HepG2 (cell line): ENCODE measurements at regions of chr2 and their contacts with region 1.

Region 1: GRCh38 chr2:219057709-219058540 is 2.8 kb downstream of the IHH start:
- DNase-seq: peak; percentile 62
- ATAC-seq: peak; percentile 78
- H3K4me3 ChIP-seq: peak overlapping the region; percentile 29 to 70 (median 50); a peak in 4 of 6 replicates
- H3K27ac ChIP-seq: no peak overlapping the region
- H3K4me1 ChIP-seq: peaks cover 23% of the 10 kb centered on the region
- H3K27me3 ChIP-seq: peaks cover 14 to 41% of the 10 kb centered on the region in 2 experiments; a peak in 4 of 5 replicates
- CTCF ChIP-seq: peak; percentile 100
- EP300 ChIP-seq: no peak
- POLR2A ChIP-seq: no peak
- RAD21 ChIP-seq: peak; percentile 100

Region 2: DNA sequence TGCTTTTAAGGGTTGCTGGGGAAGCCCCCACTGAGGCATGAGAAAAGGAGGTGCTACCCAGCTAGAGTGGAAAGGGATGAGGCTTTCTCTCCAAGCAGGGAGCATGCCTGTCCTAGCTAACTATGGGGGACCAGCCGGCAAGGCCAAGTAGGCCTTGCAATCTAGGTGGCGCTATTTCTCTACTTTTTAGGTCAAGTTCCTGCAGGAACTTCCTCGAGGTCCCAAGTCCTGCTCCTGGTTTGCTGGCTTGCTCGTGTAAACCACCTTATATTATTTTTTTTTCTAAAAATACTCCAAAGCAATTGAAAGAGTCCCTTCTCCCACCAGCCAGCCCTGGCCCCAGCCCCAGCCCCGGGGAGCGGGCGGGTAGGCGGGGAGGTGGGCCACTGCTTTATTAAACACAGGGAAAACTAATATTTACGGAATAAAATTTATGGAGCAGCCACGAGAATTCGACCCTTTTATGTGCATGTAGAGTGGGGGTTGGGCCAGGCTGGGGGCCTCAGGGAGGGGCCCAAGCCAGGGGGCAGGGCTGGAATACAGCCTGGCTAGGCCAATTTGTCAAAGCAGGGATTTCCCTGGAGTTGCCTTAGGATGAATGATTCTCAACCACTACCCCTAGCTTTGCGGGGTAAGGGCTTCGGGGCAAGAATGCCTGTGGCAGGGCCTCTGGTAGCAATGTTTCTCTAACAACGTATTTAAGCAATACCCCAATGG is 15.6 kb after region 1 on chr2:
- CTCF ChIA-PET with region 1: interaction called, 12 read pairs
- POLR2A ChIA-PET with region 1: interaction called, 38 read pairs
- in situ Hi-C with region 1: no loop called
- intact Hi-C with region 1: loop called (anchors 1 kb)
- DNase-seq: peak; percentile 80
- ATAC-seq: peak; percentile 66
- H3K4me3 ChIP-seq: no peak overlapping the region
- H3K27ac ChIP-seq: no peak overlapping the region
- H3K4me1 ChIP-seq: peaks cover 53% of the 10 kb centered on the region
- H3K27me3 ChIP-seq: no peaks in the 10 kb centered on the region
- CTCF ChIP-seq: peak; percentile 88
- EP300 ChIP-seq: no peak
- POLR2A ChIP-seq: no peak
- RAD21 ChIP-seq: peak; percentile 90

Region 3: GRCh38 chr2:219111375-219112061 is 53.6 kb after region 1 on chr2:
- CTCF ChIA-PET with region 1: interaction called, 82 read pairs
- POLR2A ChIA-PET with region 1: interaction called, 22 read pairs
- in situ Hi-C with region 1: loop called (anchors 5 kb)
- intact Hi-C with region 1: no loop called
- DNase-seq: peak; percentile 77
- ATAC-seq: peak; percentile 90
- H3K4me3 ChIP-seq: peak overlapping the region in 1 of 3 experiments; percentile 20; a peak in 2 of 6 replicates
- H3K27ac ChIP-seq: peak overlapping the region; percentile 17
- H3K4me1 ChIP-seq: peaks cover 83% of the 10 kb centered on the region
- H3K27me3 ChIP-seq: no peaks in the 10 kb centered on the region
- CTCF ChIP-seq: no peak
- EP300 ChIP-seq: peak in 1 of 2 experiments; percentile 84; a peak in 2 of 4 replicates
- POLR2A ChIP-seq: no peak
- RAD21 ChIP-seq: no peak

Region 4: GRCh38 chr2:219126551-219126950 is 68.6 kb after region 1 on chr2:
- CTCF ChIA-PET with region 1: interaction called, 5 read pairs
- POLR2A ChIA-PET with region 1: interaction called, 4 read pairs
- in situ Hi-C with region 1: no loop called
- intact Hi-C with region 1: loop called (anchors 2 kb)
- DNase-seq: peak; percentile 78
- ATAC-seq: peak; percentile 89
- H3K4me3 ChIP-seq: no peak overlapping the region
- H3K27ac ChIP-seq: no peak overlapping the region
- H3K4me1 ChIP-seq: peaks cover 67% of the 10 kb centered on the region
- H3K27me3 ChIP-seq: no peaks in the 10 kb centered on the region
- CTCF ChIP-seq: no peak
- EP300 ChIP-seq: peak in 1 of 2 experiments; percentile 25; a peak in 1 of 4 replicates
- POLR2A ChIP-seq: no peak
- RAD21 ChIP-seq: no peak

Region 5: DNA sequence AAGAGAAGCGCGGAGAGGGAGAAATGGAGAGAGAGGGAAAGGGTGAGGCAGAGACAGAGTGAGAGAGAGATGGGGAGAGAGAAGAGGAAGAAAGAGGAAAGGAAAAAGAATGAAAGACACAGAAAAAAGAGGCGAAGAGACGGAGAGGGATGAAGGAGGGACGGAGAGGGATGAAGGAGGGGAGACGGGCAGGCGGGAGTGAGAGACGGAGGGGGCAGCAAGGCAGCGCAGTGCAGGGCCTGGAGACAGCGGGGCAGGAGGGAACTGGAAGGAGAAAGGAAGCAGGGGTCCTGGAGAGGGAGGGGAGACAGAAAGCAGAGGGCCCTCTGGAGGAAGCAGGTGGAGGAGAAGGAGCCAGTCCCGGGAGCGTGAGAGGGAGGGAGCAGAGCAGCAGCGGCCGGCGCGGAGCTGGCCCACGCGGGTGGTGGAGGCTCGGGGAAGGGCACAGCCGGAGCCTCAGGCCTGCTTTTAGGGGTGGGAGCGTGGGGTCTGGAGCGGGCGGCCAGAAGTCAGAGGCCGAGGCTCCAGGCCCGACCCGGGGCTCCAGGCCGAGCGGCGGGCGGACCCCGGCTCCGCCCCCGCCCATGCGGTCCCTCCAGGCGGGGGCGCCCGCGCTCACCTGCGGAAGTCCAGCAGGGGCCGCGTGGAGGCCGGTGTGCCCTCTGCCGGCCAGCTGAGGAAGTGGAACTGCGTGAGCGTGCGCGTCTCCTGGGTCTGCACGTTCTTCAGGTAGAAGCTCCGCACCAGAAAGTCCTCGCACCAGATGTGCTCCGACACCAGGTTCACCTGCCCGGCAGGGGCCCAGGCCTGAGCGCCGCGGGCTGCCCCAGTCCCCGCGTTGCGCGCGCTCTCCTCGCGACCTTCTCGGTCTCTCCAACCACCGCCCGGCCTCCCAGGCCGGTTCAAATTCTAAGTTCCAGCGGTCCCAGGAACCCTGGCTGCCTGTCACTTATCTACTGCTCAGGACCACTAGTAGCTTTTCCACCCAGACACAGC is 236.7 kb after region 1 on chr2:
- CTCF ChIA-PET with region 1: interaction called, 3 read pairs
- POLR2A ChIA-PET with region 1: interaction called, 5 read pairs
- in situ Hi-C with region 1: no loop called
- intact Hi-C with region 1: loop called (anchors 5 kb)
- DNase-seq: peak; percentile 80
- ATAC-seq: peak; percentile 85
- H3K4me3 ChIP-seq: peak overlapping the region; percentile 60 to 81 (median 80)
- H3K27ac ChIP-seq: no peak overlapping the region
- H3K4me1 ChIP-seq: peaks cover 36% of the 10 kb centered on the region
- H3K27me3 ChIP-seq: peaks cover 6 to 83% of the 10 kb centered on the region in 2 experiments; a peak in 4 of 5 replicates
- CTCF ChIP-seq: peak; percentile 93
- EP300 ChIP-seq: peak; percentile 48 to 53; a peak in 1 of 4 replicates
- POLR2A ChIP-seq: peak; percentile 48 to 70; a peak in 3 of 4 replicates
- RAD21 ChIP-seq: peak; percentile 99